ENCODE measurements at regions of chr21 and their contacts with region 1.

Region 1: DNA sequence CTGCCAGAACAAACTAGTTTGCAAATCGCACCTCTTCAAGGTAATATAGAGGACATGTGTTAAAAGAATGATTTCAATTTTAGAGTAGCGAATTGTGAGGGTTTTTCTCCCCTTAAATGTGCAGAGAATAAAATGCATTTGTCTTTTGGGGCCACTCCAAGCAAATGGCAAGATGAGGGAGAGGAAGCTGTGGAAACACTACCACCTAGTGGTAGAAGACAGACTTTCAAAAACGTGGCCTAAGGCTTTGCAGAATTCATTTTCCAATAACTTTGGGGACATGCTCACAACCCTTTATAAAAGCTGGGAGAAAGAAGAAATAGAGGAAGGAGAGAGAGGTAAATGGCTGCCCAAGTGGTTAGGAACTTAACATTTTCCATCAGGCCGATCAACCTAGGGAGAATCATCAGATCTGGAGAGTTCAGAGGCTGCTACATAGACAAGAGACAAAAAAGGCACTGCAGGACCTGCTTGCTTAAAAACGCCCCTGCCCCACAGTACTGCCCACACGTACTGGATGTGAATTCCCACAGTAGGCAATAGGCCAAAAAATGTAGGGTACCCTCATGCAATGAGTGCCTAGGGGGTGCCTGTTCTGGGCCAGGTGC is 15.7 kb upstream of the RCAN1 start:
- DNase-seq: peak; percentile 33
- ATAC-seq: peak; percentile 92
- H3K4me3 ChIP-seq: no peak overlapping the region
- H3K27ac ChIP-seq: no peak overlapping the region
- H3K4me1 ChIP-seq: no peaks in the 10 kb centered on the region
- H3K27me3 ChIP-seq: no peaks in the 10 kb centered on the region
- CTCF ChIP-seq: peak; percentile 65 to 87 (median 75)
- EP300 ChIP-seq: no peak
- POLR2A ChIP-seq: no peak
- RAD21 ChIP-seq: peak; percentile 98

Region 2: GRCh38 chr21:34243562-34243961 is 387.1 kb before region 1 on chr21:
- CTCF ChIA-PET with region 1: no interaction called
- POLR2A ChIA-PET with region 1: no interaction called
- RAD21 ChIA-PET with region 1: no interaction called
- SMC1A ChIA-PET with region 1: no interaction called
- in situ Hi-C with region 1: no loop called
- intact Hi-C with region 1: no loop called
- DNase-seq: no peak
- ATAC-seq: 0 out of 3 replicates have a peak, but pooled peaks have one; percentile 48
- H3K4me3 ChIP-seq: no peak overlapping the region
- H3K27ac ChIP-seq: no peak overlapping the region
- H3K4me1 ChIP-seq: no peaks in the 10 kb centered on the region
- H3K27me3 ChIP-seq: no peaks in the 10 kb centered on the region
- CTCF ChIP-seq: peak; percentile 43 to 60 (median 49); a peak in 5 of 6 replicates
- EP300 ChIP-seq: no peak
- POLR2A ChIP-seq: no peak
- RAD21 ChIP-seq: peak; percentile 58

Region 3: DNA sequence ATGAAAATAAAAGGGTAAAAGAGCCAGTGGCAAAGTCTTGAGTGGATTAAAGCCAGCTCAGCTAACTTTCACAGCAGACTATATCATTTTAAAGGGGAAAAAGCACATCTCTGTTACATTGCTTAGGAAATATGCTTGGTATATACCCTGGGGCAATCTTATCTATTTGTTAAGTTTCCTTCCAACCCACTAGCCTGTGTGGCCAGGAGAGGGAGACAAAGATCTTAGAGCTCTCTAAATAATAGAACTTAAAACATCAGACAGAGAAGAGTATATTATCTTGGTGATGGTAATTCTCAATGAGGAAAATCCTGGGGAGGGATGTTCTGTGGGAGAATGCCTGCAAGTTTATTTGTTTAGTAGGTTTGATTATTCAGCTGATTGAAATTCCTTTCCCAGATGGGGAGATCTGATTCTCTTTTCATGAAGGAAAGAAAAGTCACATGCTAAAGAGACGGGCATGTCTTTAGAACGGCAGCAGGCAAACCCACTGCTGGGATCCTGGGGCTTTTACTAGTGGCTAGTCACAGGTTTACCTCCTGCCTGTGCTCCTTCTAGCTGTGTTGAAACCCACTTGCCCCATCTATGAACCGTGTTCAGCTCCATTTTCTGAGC is 263.2 kb before region 1 on chr21:
- CTCF ChIA-PET with region 1: interaction called, 16 read pairs
- POLR2A ChIA-PET with region 1: no interaction called
- RAD21 ChIA-PET with region 1: interaction called, 3 read pairs
- SMC1A ChIA-PET with region 1: interaction called, 6 read pairs
- in situ Hi-C with region 1: no loop called
- intact Hi-C with region 1: no loop called
- DNase-seq: no peak
- ATAC-seq: peak; percentile 91
- H3K4me3 ChIP-seq: no peak overlapping the region
- H3K27ac ChIP-seq: no peak overlapping the region
- H3K4me1 ChIP-seq: no peaks in the 10 kb centered on the region
- H3K27me3 ChIP-seq: no peaks in the 10 kb centered on the region
- CTCF ChIP-seq: peak; percentile 69 to 73 (median 72)
- EP300 ChIP-seq: no peak
- POLR2A ChIP-seq: no peak
- RAD21 ChIP-seq: peak; percentile 70

Region 4: DNA sequence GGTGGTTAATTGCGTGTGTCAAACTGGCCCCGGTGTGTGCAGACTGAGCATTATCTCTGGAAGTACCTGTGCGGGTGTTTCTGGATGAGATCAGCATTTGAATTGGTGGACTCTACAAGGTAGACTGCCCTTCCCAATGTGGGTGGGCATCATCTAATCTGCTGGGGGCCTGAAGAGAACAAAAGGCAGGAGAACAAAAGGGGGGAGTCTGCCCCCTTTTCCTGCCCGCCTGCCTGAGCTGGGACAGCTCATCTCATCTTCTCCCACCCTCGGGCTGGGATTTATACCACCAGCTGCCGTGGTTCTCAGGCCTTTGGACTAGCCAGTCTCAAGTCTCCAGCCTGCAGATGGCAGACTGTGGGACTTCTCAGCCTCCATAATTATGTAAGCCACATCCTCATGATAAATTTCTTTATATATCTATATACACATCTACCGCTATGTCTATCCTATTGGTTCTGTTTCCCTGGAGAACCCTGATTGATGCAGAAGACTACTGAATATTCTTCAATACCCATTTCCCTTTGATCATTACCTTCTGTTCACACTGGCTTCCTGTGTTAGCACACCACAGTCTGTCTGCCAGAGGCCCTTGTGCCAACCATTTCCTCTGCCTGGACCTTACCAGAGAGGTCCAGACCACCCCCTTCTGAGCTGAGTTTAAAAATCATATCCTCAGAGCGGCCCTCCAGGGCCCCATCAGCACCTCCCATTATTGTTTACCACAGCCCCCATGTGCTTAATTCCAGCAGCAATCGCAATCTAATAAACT is 40.9 kb before region 1 on chr21:
- CTCF ChIA-PET with region 1: no interaction called
- POLR2A ChIA-PET with region 1: no interaction called
- RAD21 ChIA-PET with region 1: no interaction called
- SMC1A ChIA-PET with region 1: no interaction called
- in situ Hi-C with region 1: loop called (anchors 5 kb)
- intact Hi-C with region 1: no loop called
- DNase-seq: no peak
- ATAC-seq: no peak
- H3K4me3 ChIP-seq: no peak overlapping the region
- H3K27ac ChIP-seq: no peak overlapping the region
- H3K4me1 ChIP-seq: peaks cover under 1% of the 10 kb centered on the region; the same call in 1 of the 2 replicates
- H3K27me3 ChIP-seq: no peaks in the 10 kb centered on the region
- CTCF ChIP-seq: no peak
- EP300 ChIP-seq: no peak
- POLR2A ChIP-seq: no peak
- RAD21 ChIP-seq: no peak

Region 5: DNA sequence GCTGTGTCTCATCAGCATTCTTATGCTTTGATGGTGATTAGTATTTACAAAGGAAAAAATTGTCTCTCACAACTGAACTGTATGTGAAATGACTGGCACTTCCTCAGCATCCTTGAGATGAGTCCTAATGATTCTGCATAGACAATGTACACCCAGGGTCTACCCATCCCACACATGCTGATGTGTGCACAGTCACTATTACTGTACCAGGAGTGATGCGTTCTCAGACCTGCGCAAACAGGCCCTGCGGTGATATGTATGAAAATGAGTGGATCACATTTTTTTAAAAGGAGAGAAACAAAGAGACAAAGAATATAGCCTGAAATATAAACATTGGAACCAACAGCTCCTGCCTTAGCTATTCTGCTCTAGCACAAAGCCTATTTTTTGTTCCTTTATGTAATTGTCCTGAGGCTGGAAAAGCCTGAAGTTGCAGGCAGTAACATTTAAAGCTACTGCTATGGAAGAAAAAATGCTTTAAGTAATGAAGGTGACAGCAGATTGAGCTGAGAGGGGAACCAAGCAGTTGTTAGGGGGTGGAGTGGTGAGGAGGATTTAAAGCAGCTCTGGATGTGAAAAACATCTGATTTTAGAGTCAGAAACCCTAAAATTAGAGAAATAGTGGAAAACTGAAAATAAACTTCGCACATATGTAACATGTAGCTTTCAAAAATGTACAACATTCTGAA is 21.3 kb before region 1 on chr21:
- CTCF ChIA-PET with region 1: interaction called, 17 read pairs
- POLR2A ChIA-PET with region 1: no interaction called
- RAD21 ChIA-PET with region 1: interaction called, 12 read pairs
- SMC1A ChIA-PET with region 1: interaction called, 24 read pairs
- in situ Hi-C with region 1: no loop called
- intact Hi-C with region 1: no loop called
- DNase-seq: no peak
- ATAC-seq: no peak
- H3K4me3 ChIP-seq: no peak overlapping the region
- H3K27ac ChIP-seq: no peak overlapping the region
- H3K4me1 ChIP-seq: peaks cover 6% of the 10 kb centered on the region; the same call in 1 of the 2 replicates
- H3K27me3 ChIP-seq: no peaks in the 10 kb centered on the region
- CTCF ChIP-seq: no peak
- EP300 ChIP-seq: no peak
- POLR2A ChIP-seq: no peak
- RAD21 ChIP-seq: no peak

Region 6: GRCh38 chr21:34619841-34620665 is 10.6 kb before region 1 on chr21:
- CTCF ChIA-PET with region 1: interaction called, 30 read pairs
- POLR2A ChIA-PET with region 1: interaction called, 3 read pairs
- RAD21 ChIA-PET with region 1: interaction called, 3 read pairs
- SMC1A ChIA-PET with region 1: interaction called, 7 read pairs
- in situ Hi-C with region 1: no loop called
- intact Hi-C with region 1: no loop called
- DNase-seq: no peak
- ATAC-seq: no peak
- H3K4me3 ChIP-seq: no peak overlapping the region
- H3K27ac ChIP-seq: no peak overlapping the region
- H3K4me1 ChIP-seq: peaks cover 11% of the 10 kb centered on the region
- H3K27me3 ChIP-seq: no peaks in the 10 kb centered on the region
- CTCF ChIP-seq: no peak
- EP300 ChIP-seq: no peak
- POLR2A ChIP-seq: no peak
- RAD21 ChIP-seq: no peak

Region 7: GRCh38 chr21:34669149-34669879 is 38.7 kb after region 1 on chr21:
- CTCF ChIA-PET with region 1: interaction called, 15 read pairs
- POLR2A ChIA-PET with region 1: no interaction called
- RAD21 ChIA-PET with region 1: interaction called, 6 read pairs
- SMC1A ChIA-PET with region 1: interaction called, 12 read pairs
- in situ Hi-C with region 1: no loop called
- intact Hi-C with region 1: no loop called
- DNase-seq: no peak
- ATAC-seq: peak; percentile 80
- H3K4me3 ChIP-seq: peak overlapping the region; percentile 91
- H3K27ac ChIP-seq: peak overlapping the region; percentile 58
- H3K4me1 ChIP-seq: peaks cover 18% of the 10 kb centered on the region
- H3K27me3 ChIP-seq: no peaks in the 10 kb centered on the region; a peak in 1 of 4 replicates
- CTCF ChIP-seq: no peak
- EP300 ChIP-seq: no peak
- POLR2A ChIP-seq: peak; percentile 71
- RAD21 ChIP-seq: no peak

Region 8: GRCh38 chr21:34701726-34702125 is 71.1 kb after region 1 on chr21:
- CTCF ChIA-PET with region 1: no interaction called
- POLR2A ChIA-PET with region 1: no interaction called
- RAD21 ChIA-PET with region 1: no interaction called
- SMC1A ChIA-PET with region 1: no interaction called
- in situ Hi-C with region 1: no loop called
- intact Hi-C with region 1: no loop called
- DNase-seq: no peak
- ATAC-seq: no peak
- H3K4me3 ChIP-seq: no peak overlapping the region
- H3K27ac ChIP-seq: no peak overlapping the region
- H3K4me1 ChIP-seq: peaks cover 14% of the 10 kb centered on the region
- H3K27me3 ChIP-seq: no peaks in the 10 kb centered on the region
- CTCF ChIP-seq: no peak
- EP300 ChIP-seq: no peak
- POLR2A ChIP-seq: no peak
- RAD21 ChIP-seq: no peak